ENCODE measurements at regions of chr10 and their contacts with region 1.

Region 1: GRCh38 chr10:80104066-80104926 is 25.8 kb downstream of the TMEM254 start:
- DNase-seq: no peak
- ATAC-seq: no peak
- H3K4me3 ChIP-seq: no peak overlapping the region
- H3K27ac ChIP-seq: no peak overlapping the region
- H3K4me1 ChIP-seq: no peaks in the 10 kb centered on the region
- H3K27me3 ChIP-seq: no peaks in the 10 kb centered on the region
- CTCF ChIP-seq: no peak

Region 2: DNA sequence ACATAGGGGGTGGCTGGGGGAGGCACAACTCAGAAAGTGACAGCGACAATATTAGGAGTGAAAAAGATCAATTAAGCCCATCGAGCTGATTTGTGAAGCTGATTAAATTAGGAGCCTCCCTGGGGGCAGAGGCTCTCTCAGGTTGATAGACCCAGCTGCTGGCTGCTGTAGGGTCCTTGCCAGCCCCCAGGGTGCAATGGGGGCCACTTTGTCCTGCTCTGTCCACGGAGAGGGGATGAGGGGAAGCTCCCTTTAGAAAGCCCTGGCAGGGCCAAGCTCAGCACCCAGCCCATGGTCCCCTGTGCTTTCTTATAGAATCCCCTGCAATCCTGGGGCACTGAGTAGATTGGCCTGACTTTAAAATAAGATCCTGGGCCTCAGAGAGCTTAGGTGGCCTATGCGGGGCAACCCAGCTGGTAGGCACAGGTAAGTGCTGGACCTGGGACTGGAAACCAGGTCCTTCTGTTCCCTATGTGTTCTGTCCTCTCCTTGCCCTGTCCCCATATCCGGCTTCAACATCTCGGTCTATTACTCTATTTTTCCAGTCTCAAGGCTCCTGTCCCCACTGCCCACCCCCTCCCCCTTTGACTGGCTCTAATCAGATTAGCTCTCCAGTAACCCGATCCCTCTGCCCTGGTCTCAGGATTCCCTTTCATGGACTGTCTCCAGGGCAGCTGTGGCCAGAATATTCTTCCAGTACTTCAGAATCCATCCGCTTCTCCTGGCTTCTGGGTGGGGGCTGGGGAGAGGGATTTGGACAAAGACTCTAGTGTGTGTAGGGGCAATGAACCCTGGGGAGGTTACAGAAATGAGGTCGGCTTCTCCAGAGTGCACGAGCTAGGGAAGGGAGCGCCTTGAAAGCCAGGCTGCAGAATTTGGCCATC is 1811.1 kb before region 1 on chr10:
- CTCF ChIA-PET with region 1: interaction called, 16 read pairs
- POLR2A ChIA-PET with region 1: no interaction called
- in situ Hi-C with region 1: no loop called
- intact Hi-C with region 1: no loop called
- DNase-seq: no peak
- ATAC-seq: no peak
- H3K4me3 ChIP-seq: no peak overlapping the region
- H3K27ac ChIP-seq: no peak overlapping the region
- H3K4me1 ChIP-seq: no peaks in the 10 kb centered on the region
- H3K27me3 ChIP-seq: no peaks in the 10 kb centered on the region
- CTCF ChIP-seq: no peak

Region 3: GRCh38 chr10:79463578-79464496 is 640.5 kb before region 1 on chr10:
- CTCF ChIA-PET with region 1: no interaction called
- POLR2A ChIA-PET with region 1: no interaction called
- in situ Hi-C with region 1: no loop called
- intact Hi-C with region 1: no loop called
- DNase-seq: no peak
- ATAC-seq: no peak
- H3K4me3 ChIP-seq: no peak overlapping the region
- H3K27ac ChIP-seq: no peak overlapping the region
- H3K4me1 ChIP-seq: no peaks in the 10 kb centered on the region
- H3K27me3 ChIP-seq: peaks cover 12% of the 10 kb centered on the region
- CTCF ChIP-seq: no peak